CD4-positive, alpha-beta memory T cell (primary cell): ENCODE measurements at regions of chr4 and their contacts with region 1.

Region 1: GRCh38 chr4:38759113-38759789 is 23.5 kb downstream of the TLR10 start:
- DNase-seq: peak; percentile 44 to 63 (median 55)
- H3K4me3 ChIP-seq: no peak overlapping the region
- H3K4me3 Mint-ChIP-seq: peak overlapping the region in 1 of 8 donors; percentile 39
- H3K27ac ChIP-seq: no peak overlapping the region
- H3K27ac Mint-ChIP-seq: peak overlapping the region in 1 of 7 donors; percentile 56
- H3K4me1 ChIP-seq: peaks cover 5% of the 10 kb centered on the region
- H3K4me1 Mint-ChIP-seq: peaks cover 5 to 10% (median 6%) of the 10 kb centered on the region in 4 donors
- H3K27me3 ChIP-seq: no peaks in the 10 kb centered on the region
- H3K27me3 Mint-ChIP-seq: no peaks in the 10 kb centered on the region

Region 2: DNA sequence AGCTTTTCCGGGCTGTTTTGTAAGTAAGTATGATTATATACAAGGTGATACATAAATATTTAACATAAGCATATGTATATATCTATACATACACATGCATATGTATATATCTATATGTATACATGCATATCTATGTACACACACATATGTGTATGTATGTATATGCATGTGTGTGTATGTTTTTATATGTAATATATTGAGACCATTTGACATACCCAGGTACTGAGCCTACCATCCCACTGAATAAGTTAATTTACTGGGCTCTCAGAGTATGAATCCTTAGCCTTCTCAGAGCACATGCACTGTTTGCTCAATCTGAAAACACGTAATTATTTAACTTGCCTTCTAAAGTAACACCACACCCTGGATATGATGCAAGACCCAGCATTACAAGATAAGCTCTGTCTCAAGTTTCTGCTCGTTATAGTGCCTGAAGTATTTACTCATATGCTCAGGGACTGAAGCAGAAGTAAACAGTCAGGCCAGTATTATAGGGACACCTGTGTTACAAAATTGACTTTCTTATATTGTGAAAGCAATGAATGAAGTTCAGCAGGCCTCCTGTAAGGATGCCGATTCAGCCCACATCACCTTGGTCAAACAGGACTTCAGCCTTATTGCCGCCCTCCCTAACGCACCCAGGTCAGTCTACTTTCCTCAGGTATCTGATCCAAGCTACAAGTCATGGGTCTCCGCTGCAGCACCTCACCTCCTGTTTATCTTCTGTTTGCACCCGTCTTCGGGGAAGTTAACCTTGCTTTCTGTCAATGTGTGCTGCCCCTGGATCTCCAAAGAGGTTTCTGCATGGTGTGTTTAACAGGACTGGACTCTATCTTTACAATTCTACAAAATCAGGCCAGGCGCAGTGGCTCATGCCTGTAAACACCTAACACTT is 138.2 kb before region 1 on chr4:
- CTCF ChIA-PET with region 1: no interaction called
- POLR2A ChIA-PET with region 1: no interaction called
- intact Hi-C with region 1: no loop called
- DNase-seq: no peak
- H3K4me3 ChIP-seq: no peak overlapping the region
- H3K4me3 Mint-ChIP-seq: no peak overlapping the region
- H3K27ac ChIP-seq: no peak overlapping the region
- H3K27ac Mint-ChIP-seq: no peak overlapping the region
- H3K4me1 ChIP-seq: no peaks in the 10 kb centered on the region
- H3K4me1 Mint-ChIP-seq: peaks cover 10 to 19% (median 13%) of the 10 kb centered on the region in 4 donors
- H3K27me3 ChIP-seq: no peaks in the 10 kb centered on the region
- H3K27me3 Mint-ChIP-seq: no peaks in the 10 kb centered on the region

Region 3: GRCh38 chr4:38698176-38698575 is 61.1 kb before region 1 on chr4:
- CTCF ChIA-PET with region 1: no interaction called
- POLR2A ChIA-PET with region 1: no interaction called
- intact Hi-C with region 1: no loop called
- DNase-seq: no peak
- H3K4me3 ChIP-seq: no peak overlapping the region
- H3K4me3 Mint-ChIP-seq: no peak overlapping the region
- H3K27ac ChIP-seq: no peak overlapping the region
- H3K27ac Mint-ChIP-seq: peak overlapping the region in 2 of 7 donors; percentile 1 to 60
- H3K4me1 ChIP-seq: no peaks in the 10 kb centered on the region
- H3K4me1 Mint-ChIP-seq: peaks cover 0 to 15% (median 9%) of the 10 kb centered on the region in 4 donors
- H3K27me3 ChIP-seq: no peaks in the 10 kb centered on the region
- H3K27me3 Mint-ChIP-seq: no peaks in the 10 kb centered on the region

Region 4: GRCh38 chr4:38730830-38731646 is 28.2 kb before region 1 on chr4:
- CTCF ChIA-PET with region 1: interaction called, 12 read pairs
- POLR2A ChIA-PET with region 1: no interaction called
- intact Hi-C with region 1: no loop called
- DNase-seq: peak; percentile 75 to 77 (median 76)
- H3K4me3 ChIP-seq: no peak overlapping the region
- H3K4me3 Mint-ChIP-seq: peak overlapping the region in 1 of 8 donors; percentile 39
- H3K27ac ChIP-seq: no peak overlapping the region
- H3K27ac Mint-ChIP-seq: peak overlapping the region in 2 of 7 donors; percentile 8 to 62
- H3K4me1 ChIP-seq: peaks cover 18% of the 10 kb centered on the region
- H3K4me1 Mint-ChIP-seq: peaks cover 12 to 29% (median 18%) of the 10 kb centered on the region in 4 donors
- H3K27me3 ChIP-seq: no peaks in the 10 kb centered on the region
- H3K27me3 Mint-ChIP-seq: peaks cover 0 to 3% of the 10 kb centered on the region in 2 donors

Region 5: GRCh38 chr4:38738940-38739803 is 20.1 kb before region 1 on chr4:
- CTCF ChIA-PET with region 1: interaction called, 12 read pairs
- POLR2A ChIA-PET with region 1: no interaction called
- intact Hi-C with region 1: no loop called
- DNase-seq: no peak
- H3K4me3 ChIP-seq: no peak overlapping the region
- H3K4me3 Mint-ChIP-seq: no peak overlapping the region
- H3K27ac ChIP-seq: no peak overlapping the region
- H3K27ac Mint-ChIP-seq: no peak overlapping the region
- H3K4me1 ChIP-seq: no peaks in the 10 kb centered on the region
- H3K4me1 Mint-ChIP-seq: peaks cover 0 to 5% (median 3%) of the 10 kb centered on the region in 4 donors
- H3K27me3 ChIP-seq: no peaks in the 10 kb centered on the region
- H3K27me3 Mint-ChIP-seq: peaks cover 3 to 8% of the 10 kb centered on the region in 2 donors

Region 6: DNA sequence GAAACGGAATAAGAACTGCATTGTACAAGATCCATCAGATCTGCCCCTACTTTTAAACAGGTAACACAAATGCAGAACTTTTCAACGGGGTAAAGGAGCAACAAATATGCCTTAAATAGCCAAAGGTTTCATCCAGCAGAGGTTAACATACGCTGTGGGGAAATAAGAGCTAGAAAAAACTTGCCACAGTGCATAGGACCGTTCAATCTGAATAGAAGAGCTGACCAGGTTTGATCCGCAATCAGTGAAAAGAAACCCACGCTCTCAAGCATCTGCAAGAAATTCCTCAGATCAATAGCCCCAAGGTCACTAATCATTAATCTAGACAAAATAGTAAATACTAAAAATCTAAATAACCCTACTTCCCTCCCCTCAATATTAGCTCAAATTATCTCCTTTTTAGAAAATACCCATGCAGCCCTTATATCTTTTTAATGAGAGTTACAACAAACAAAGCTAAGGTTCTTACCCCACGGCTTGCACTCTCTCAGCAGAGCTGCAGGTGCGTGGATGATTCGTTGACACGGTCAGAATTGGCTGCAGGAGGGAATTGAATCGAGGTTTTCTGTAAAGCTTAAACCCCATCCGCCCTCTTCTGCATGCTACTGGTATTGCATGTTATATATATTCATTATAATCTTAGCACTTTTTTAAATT is 23.3 kb after region 1 on chr4 and contains the start of gene TLR10:
- CTCF ChIA-PET with region 1: interaction called, 123 read pairs
- POLR2A ChIA-PET with region 1: interaction called, 6 read pairs
- intact Hi-C with region 1: loop called (anchors 1 kb)
- DNase-seq: peak in 4 of 5 donors; percentile 26 to 50 (median 40)
- H3K4me3 ChIP-seq: no peak within 1 kb of the TSS
- H3K4me3 Mint-ChIP-seq: peak within 1 kb of the TSS in 4 of 8 donors; percentile 22 to 62 (median 43)
- H3K27ac ChIP-seq: no peak within 1 kb of the TSS
- H3K27ac Mint-ChIP-seq: no peak within 1 kb of the TSS
- H3K4me1 ChIP-seq: no peaks in the 10 kb centered on the region
- H3K4me1 Mint-ChIP-seq: peaks cover 2 to 5% (median 3%) of the 10 kb centered on the region in 4 donors
- H3K27me3 ChIP-seq: no peaks in the 10 kb centered on the region
- H3K27me3 Mint-ChIP-seq: peaks cover 0 to 2% of the 10 kb centered on the region in 2 donors
- total RNA-seq, gene TLR10: 0.20 to 0.28 TPM

Region 7: DNA sequence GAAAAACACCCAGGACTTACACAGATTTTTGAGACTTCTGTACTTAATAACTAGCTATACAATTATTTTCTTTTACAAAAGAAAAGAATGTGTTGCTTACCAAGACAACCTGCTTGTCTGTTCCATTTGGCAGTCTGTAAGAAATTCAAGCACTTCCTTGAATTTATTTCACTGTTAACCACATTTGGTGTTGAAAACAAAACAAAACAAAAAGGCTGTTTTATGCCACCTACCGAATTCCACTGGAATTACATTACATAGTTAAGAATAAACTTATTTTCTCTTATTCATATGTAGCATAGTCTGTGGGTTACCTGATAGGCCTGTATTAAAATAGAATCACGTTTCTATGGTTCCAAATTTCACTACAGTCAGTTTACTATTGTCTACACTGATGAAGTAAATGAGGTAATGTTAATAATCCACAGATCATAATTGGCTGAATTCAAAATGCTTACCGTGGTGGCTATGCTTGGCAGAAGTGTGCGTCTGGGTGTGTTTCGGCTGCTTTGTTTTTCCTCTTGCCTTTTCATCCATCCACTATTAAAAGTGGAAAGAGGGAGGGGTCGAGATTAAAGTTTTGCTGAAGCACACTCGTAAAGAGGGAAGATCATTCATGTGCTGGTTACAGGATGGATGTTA is 45.5 kb after region 1 on chr4 and contains the start of gene TLR1:
- CTCF ChIA-PET with region 1: interaction called, 111 read pairs
- POLR2A ChIA-PET with region 1: interaction called, 7 read pairs
- intact Hi-C with region 1: loop called (anchors 1 kb)
- DNase-seq: peak in 4 of 5 donors; percentile 65 to 71 (median 65)
- H3K4me3 ChIP-seq: peak within 1 kb of the TSS; percentile 54 to 57
- H3K4me3 Mint-ChIP-seq: peak within 1 kb of the TSS; percentile 90 to 96 (median 92)
- H3K27ac ChIP-seq: peak within 1 kb of the TSS; percentile 47
- H3K27ac Mint-ChIP-seq: peak within 1 kb of the TSS; percentile 84 to 99 (median 94)
- H3K4me1 ChIP-seq: peaks cover 25% of the 10 kb centered on the region
- H3K4me1 Mint-ChIP-seq: peaks cover 24 to 45% (median 35%) of the 10 kb centered on the region in 4 donors
- H3K27me3 ChIP-seq: no peaks in the 10 kb centered on the region
- H3K27me3 Mint-ChIP-seq: no peaks in the 10 kb centered on the region
- total RNA-seq, gene TLR1: 20.6 to 24.3 TPM

Region 8: GRCh38 chr4:38842994-38843393 is 83.7 kb after region 1 on chr4:
- CTCF ChIA-PET with region 1: interaction called, 10 read pairs
- POLR2A ChIA-PET with region 1: interaction called, 3 read pairs
- intact Hi-C with region 1: no loop called
- DNase-seq: no peak
- H3K4me3 ChIP-seq: no peak overlapping the region
- H3K4me3 Mint-ChIP-seq: no peak overlapping the region
- H3K27ac ChIP-seq: no peak overlapping the region
- H3K27ac Mint-ChIP-seq: no peak overlapping the region
- H3K4me1 ChIP-seq: peaks cover 8% of the 10 kb centered on the region
- H3K4me1 Mint-ChIP-seq: peaks cover 12 to 18% (median 13%) of the 10 kb centered on the region in 4 donors
- H3K27me3 ChIP-seq: no peaks in the 10 kb centered on the region
- H3K27me3 Mint-ChIP-seq: no peaks in the 10 kb centered on the region

Region 9: GRCh38 chr4:39004758-39005157 is 245.5 kb after region 1 on chr4:
- CTCF ChIA-PET with region 1: no interaction called
- POLR2A ChIA-PET with region 1: no interaction called
- intact Hi-C with region 1: no loop called
- DNase-seq: no peak
- H3K4me3 ChIP-seq: no peak overlapping the region
- H3K4me3 Mint-ChIP-seq: no peak overlapping the region
- H3K27ac ChIP-seq: no peak overlapping the region
- H3K27ac Mint-ChIP-seq: peak overlapping the region in 4 of 7 donors; percentile 30 to 81 (median 56)
- H3K4me1 ChIP-seq: no peaks in the 10 kb centered on the region
- H3K4me1 Mint-ChIP-seq: peaks cover 13 to 24% (median 17%) of the 10 kb centered on the region in 4 donors
- H3K27me3 ChIP-seq: no peaks in the 10 kb centered on the region
- H3K27me3 Mint-ChIP-seq: no peaks in the 10 kb centered on the region

Region 10: DNA sequence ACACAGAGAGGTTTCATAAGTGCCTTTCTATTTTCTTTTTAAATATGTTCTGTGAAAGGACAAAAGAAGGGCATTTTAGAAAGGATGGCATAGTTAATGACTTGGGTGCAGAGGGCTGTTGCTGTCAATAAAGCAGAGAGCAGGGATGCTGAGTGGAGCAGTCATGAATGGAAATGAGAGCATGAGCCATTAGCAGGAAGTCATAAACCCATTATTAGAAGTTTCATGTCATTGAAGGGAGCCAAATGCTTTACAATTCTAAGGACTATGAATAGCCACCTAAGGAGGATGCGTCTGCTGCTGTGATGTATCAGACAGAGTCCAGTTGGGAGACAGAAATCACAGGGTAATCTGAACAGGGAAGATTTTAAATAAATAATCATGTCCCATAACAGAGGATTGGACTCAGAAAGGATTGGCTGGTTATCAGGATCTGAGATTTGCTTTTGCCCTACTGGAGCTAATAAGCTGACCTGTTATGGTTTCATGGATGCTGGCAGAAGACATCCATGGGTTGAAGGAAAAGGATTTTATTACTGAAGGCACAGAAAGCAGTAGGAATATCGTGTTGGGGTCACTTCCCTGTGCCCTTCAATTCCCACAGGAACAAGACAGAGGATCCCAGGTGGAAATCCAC is 375.6 kb after region 1 on chr4:
- CTCF ChIA-PET with region 1: interaction called, 32 read pairs
- POLR2A ChIA-PET with region 1: no interaction called
- intact Hi-C with region 1: loop called (anchors 1 kb)
- DNase-seq: peak in 1 of 5 donors; percentile 5
- H3K4me3 ChIP-seq: no peak overlapping the region
- H3K4me3 Mint-ChIP-seq: no peak overlapping the region
- H3K27ac ChIP-seq: no peak overlapping the region
- H3K27ac Mint-ChIP-seq: peak overlapping the region in 4 of 7 donors; percentile 0 to 63 (median 45)
- H3K4me1 ChIP-seq: peaks cover 10% of the 10 kb centered on the region
- H3K4me1 Mint-ChIP-seq: peaks cover 9 to 12% (median 10%) of the 10 kb centered on the region in 4 donors
- H3K27me3 ChIP-seq: no peaks in the 10 kb centered on the region
- H3K27me3 Mint-ChIP-seq: no peaks in the 10 kb centered on the region